ENCODE measurements at regions of chr18 and their contacts with region 1.

Region 1: DNA sequence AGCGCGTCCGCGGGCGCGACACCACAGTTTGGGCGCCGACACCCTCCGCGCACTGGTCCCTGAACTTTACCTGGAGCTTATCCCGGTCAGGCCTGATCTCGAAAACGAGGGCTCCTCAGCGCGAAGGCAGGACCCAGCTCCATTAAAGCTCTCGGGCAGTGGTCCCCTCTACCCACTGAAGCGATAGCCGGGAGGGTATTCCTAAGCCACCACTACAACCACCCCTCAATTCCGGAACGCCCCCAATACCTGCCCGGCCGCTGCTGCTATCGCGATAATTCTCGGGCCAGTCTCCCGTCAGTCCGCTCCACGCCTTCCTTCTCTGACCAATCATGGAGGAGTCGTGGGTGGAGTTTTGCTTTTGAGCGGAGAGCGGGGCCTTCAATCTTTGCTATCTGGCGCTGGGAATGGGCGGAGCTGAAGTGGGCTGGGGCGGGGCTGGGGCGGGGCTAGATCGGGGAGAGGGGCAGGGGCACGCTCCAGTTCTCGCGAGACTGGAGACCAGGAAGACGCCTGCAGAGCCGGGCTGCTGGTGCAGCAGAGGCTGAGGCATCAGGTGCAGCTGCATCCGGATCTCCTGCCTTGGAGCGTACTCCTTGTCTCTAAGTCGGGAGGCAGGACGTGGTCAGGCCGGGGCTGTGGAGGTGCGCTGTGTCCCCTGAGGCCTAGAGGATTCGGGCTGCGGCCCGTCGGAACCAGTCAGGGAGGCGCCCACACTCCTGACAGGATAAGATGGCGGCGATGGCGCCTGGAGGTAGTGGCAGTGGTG is at the starts of genes PIGN and RELCH:
- DNase-seq: peak; percentile 85 to 99 (median 96)
- ATAC-seq: peak; percentile 91
- H3K4me3 Mint-ChIP-seq: peak within 1 kb of the TSS; percentile 95 to 100 (median 99)
- H3K27ac Mint-ChIP-seq: peak within 1 kb of the TSS; percentile 93 to 99 (median 98)
- H3K4me1 Mint-ChIP-seq: peaks cover 35 to 66% (median 60%) of the 10 kb centered on the region in 4 donors
- H3K27me3 Mint-ChIP-seq: no peaks in the 10 kb centered on the region
- polyA plus RNA-seq, gene PIGN: 10.9 to 13.4 (median 12.3) TPM
- polyA plus RNA-seq, gene RELCH: 6.8 to 9.3 (median 7.6) TPM

Region 2: DNA sequence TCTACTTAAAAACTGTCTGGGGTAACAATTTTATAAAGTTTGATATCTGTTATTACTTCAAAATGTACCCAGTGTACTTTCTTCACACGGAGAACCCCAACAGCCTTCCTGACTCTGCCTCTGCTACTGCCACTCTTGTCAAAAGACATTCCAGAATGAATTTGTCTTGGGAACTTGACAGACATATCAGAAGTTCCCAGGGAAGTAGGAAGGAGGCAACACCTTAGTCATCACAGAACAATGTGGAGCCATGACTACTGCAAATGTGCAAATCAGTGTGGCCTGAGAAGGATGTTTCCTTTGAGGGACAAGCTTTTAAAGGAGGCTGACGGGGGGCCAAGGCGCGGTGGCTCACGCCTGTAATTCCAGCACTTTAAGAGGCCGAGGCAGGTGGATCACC is 160.4 kb before region 1 on chr18:
- POLR2A ChIA-PET with region 1: no interaction called
- DNase-seq: no peak
- ATAC-seq: no peak
- H3K4me3 Mint-ChIP-seq: no peak overlapping the region
- H3K27ac Mint-ChIP-seq: no peak overlapping the region
- H3K4me1 Mint-ChIP-seq: peaks cover 0 to 6% (median 1%) of the 10 kb centered on the region in 4 donors
- H3K27me3 Mint-ChIP-seq: peaks cover 0 to 9% (median 3%) of the 10 kb centered on the region in 5 donors

Region 3: GRCh38 chr18:62054929-62055498 is 131.9 kb before region 1 on chr18:
- POLR2A ChIA-PET with region 1: no interaction called
- DNase-seq: no peak
- ATAC-seq: no peak
- H3K4me3 Mint-ChIP-seq: no peak overlapping the region
- H3K27ac Mint-ChIP-seq: no peak overlapping the region
- H3K4me1 Mint-ChIP-seq: no peaks in the 10 kb centered on the region
- H3K27me3 Mint-ChIP-seq: no peaks in the 10 kb centered on the region

Region 4: GRCh38 chr18:62249478-62250097 is 62.6 kb after region 1 on chr18:
- POLR2A ChIA-PET with region 1: interaction called, 15 read pairs
- DNase-seq: peak; percentile 39 to 86 (median 60)
- ATAC-seq: peak; percentile 59 to 68
- H3K4me3 Mint-ChIP-seq: no peak overlapping the region
- H3K27ac Mint-ChIP-seq: no peak overlapping the region
- H3K4me1 Mint-ChIP-seq: no peaks in the 10 kb centered on the region
- H3K27me3 Mint-ChIP-seq: no peaks in the 10 kb centered on the region